Cardiac septum (tissue), 1 donor: ENCODE measurements at regions of chr1 and their contacts with region 1.

Region 1: DNA sequence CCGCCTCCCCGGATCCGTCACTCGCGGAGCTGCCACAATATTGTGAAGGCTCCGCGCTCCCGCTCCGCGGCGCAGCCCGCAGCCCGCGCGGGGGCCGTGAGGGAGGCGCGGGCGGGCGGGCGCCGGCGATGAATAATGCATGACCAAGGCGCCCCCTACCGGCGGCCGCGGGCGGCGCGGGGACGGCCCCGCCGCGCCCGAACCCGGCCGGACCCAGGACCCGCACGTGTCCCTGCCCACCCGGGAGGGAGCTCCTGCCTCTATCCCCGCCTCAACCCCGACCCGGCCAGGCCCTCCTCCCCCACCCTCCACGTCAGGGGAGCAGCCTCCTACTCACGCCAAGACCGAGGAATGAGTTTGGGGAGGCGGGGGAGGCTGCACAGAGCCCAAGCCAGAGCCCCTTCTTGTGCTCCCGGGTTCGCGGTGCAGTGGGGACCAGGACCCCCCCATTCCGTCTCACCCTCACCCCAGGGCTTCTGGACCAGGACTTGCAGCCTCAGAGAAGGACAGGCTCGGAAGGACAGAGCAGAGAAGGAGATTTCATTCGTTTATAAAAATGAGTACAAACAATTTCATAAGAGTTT is 70.8 kb upstream of the CASZ1 start:
- DNase-seq: no peak

Region 2: GRCh38 chr1:10507111-10507879 is 359.9 kb before region 1 on chr1:
- intact Hi-C with region 1: loop called (anchors 2 kb)
- DNase-seq: no peak

Region 3: DNA sequence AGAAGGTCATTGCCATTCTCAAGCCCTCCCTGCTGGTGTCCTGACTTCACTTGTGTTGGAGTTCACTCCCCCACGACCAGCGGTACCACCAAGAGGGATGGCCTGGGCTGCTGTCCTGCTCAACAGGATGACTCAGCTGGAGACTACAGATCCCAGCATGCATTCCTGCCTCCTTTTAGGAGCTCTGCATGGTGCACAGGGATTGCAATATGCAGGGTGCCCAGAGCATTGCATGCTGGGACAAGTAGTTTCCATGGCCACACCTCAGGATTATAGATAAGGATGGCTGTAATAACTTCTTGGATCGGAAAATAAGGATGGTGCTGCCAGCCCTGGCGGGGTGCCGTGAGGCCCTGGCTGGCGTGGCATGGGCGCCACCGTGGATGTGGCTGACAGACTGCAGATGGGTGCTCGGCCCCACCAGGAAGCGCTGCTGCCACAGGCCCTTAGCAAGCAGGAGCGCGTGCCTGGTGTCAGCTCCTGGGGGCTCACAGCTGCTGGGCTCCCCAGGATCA is 220.8 kb before region 1 on chr1:
- intact Hi-C with region 1: loop called (anchors 5 kb)
- DNase-seq: peak; percentile 85

Region 4: GRCh38 chr1:10686404-10687040 is 180.7 kb before region 1 on chr1:
- intact Hi-C with region 1: loop called (anchors 5 kb)
- DNase-seq: no peak

Region 5: GRCh38 chr1:10724948-10725847 is 142.0 kb before region 1 on chr1:
- intact Hi-C with region 1: loop called (anchors 10 kb)
- DNase-seq: no peak

Region 6: GRCh38 chr1:10796019-10796944 is 70.9 kb before region 1 on chr1 and contains the start of gene CASZ1:
- intact Hi-C with region 1: loop called (anchors 1 kb)
- DNase-seq: peak; percentile 85
- total RNA-seq, gene CASZ1: 82.0 TPM